HCT116 (cell line): ENCODE measurements at regions of chr19 and their contacts with region 1.

Region 1: DNA sequence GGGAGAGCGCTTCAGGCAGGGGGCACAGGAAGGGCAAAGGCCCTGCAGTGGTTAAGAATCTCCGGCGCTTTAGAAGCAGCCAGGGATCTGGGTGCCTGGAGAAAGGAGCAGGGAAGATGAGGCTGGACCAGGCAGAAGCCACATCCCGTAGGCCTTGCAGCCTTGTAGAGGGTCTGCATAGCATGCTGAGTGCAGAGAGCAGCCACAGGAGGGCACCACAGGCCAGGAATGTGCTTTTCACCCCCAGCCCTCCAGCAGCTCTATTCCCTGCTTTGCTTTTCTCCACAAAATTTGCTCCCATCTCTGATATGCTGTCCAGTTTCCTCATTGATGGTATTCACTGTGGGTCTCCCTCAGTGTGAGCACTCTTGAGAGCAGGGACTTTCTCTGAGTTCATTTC is 5.7 kb downstream of the WDR62 start:
- DNase-seq: no peak
- ATAC-seq: peak; percentile 82
- H3K4me3 ChIP-seq: no peak overlapping the region
- H3K27ac ChIP-seq: no peak overlapping the region
- H3K4me1 ChIP-seq: peaks cover 8 to 12% of the 10 kb centered on the region in 2 experiments
- H3K27me3 ChIP-seq: no peaks in the 10 kb centered on the region
- CTCF ChIP-seq: peak; percentile 24 to 75 (median 59); a peak in 4 of 6 replicates
- POLR2A ChIP-seq: no peak
- RAD21 ChIP-seq: peak; percentile 79

Region 2: GRCh38 chr19:35949131-35949530 is 111.3 kb before region 1 on chr19:
- CTCF ChIA-PET with region 1: no interaction called
- POLR2A ChIA-PET with region 1: no interaction called
- RAD21 ChIA-PET with region 1: no interaction called
- intact Hi-C with region 1: no loop called
- DNase-seq: no peak
- ATAC-seq: no peak
- H3K4me3 ChIP-seq: no peak overlapping the region
- H3K27ac ChIP-seq: no peak overlapping the region
- H3K4me1 ChIP-seq: peaks cover 0 to 5% of the 10 kb centered on the region in 2 experiments; a peak in 2 of 4 replicates
- H3K27me3 ChIP-seq: no peaks in the 10 kb centered on the region
- CTCF ChIP-seq: no peak
- POLR2A ChIP-seq: no peak
- RAD21 ChIP-seq: no peak

Region 3: DNA sequence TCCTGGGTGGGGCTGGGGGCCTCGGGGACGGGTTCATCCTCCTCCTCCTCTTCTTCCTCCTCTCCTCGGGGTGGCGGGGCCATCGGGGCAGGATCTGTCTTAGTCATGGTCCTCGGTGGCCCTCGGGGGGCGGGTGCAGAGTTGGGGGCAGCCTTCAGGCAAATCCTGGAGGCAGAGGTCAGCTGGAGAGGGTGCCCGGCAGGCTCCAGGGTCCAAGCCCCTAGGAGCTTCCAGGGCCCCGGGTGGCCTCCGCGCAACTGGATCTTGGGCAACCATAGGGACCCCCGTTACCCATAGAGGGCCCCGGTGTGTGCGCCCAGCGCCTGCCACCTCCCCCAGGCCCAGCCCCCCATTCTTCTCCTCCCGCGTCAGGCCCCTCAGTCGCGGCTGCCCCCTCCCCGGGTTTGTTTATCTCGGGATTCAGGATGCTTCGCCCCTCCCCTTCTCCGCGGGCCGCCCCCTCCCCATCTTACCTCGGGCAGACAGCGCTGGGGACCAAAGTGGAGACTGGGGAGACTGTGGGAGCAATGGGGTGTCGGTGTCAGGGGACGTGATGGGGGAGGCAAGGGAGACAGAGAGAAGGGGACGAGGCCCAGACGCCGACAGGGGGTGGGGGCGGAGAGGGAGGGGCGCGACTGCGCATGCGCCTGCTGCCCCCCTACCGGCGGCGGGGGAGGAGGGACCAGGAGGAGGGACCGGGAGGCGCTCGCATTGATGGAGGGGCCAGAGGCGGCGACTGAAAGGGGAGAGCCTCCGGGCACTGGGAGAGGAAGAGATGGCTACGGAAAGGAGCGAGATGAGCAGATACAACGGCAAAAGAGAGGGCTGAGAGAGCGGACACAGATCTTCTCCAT is 28.0 kb before region 1 on chr19 and contains the start of gene CLIP3:
- CTCF ChIA-PET with region 1: no interaction called
- POLR2A ChIA-PET with region 1: no interaction called
- RAD21 ChIA-PET with region 1: no interaction called
- intact Hi-C with region 1: no loop called
- DNase-seq: no peak
- ATAC-seq: no peak
- H3K4me3 ChIP-seq: no peak within 1 kb of the TSS
- H3K27ac ChIP-seq: no peak within 1 kb of the TSS
- H3K4me1 ChIP-seq: no peaks in the 10 kb centered on the region
- H3K27me3 ChIP-seq: no peaks in the 10 kb centered on the region
- CTCF ChIP-seq: no peak
- POLR2A ChIP-seq: no peak
- RAD21 ChIP-seq: no peak
- total RNA-seq, gene CLIP3: 1.5 TPM

Region 4: DNA sequence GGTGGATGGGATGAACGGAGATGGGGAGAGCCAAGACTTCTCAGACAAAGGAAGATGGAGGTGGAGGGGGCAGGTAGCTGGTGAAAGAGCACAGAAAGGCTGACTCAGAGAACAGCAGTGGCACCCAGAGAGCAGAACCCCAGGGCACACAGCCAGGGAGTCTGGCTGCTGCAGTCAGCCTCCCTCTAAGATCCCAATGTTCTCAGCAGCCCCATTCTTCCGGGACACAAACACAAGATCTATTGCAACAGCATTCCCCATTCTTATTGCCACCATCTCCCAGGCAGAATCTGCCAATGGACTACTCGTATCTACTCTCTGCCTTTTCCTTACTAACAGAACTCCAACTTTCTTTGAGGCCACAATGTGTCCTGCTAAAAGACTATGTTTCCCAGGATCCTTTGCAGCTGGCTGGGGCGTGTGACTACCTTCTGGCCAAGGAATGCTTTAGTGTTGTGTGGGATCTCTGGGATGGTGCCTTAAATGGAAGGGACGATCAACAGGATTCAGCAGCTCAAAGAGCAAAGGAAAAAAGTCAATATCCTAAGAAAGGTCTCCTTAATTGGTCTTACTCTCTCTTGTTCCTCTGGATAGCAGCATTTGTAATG is 13.9 kb before region 1 on chr19:
- CTCF ChIA-PET with region 1: no interaction called
- POLR2A ChIA-PET with region 1: no interaction called
- RAD21 ChIA-PET with region 1: no interaction called
- intact Hi-C with region 1: no loop called
- DNase-seq: no peak
- ATAC-seq: no peak
- H3K4me3 ChIP-seq: no peak overlapping the region
- H3K27ac ChIP-seq: no peak overlapping the region
- H3K4me1 ChIP-seq: peaks cover under 1 to 16% of the 10 kb centered on the region in 2 experiments; a peak in 3 of 4 replicates
- H3K27me3 ChIP-seq: no peaks in the 10 kb centered on the region
- CTCF ChIP-seq: no peak
- POLR2A ChIP-seq: no peak
- RAD21 ChIP-seq: no peak

Region 5: GRCh38 chr19:36132489-36132891 is 72.1 kb after region 1 on chr19:
- CTCF ChIA-PET with region 1: interaction called, 3 read pairs
- POLR2A ChIA-PET with region 1: no interaction called
- RAD21 ChIA-PET with region 1: interaction called in 1 of 2 experiments, 4 read pairs
- intact Hi-C with region 1: loop called (anchors 5 kb)
- DNase-seq: peak; percentile 91
- ATAC-seq: peak; percentile 57
- H3K4me3 ChIP-seq: peak overlapping the region in 1 of 2 experiments; percentile 32; a peak in 2 of 4 replicates
- H3K27ac ChIP-seq: peak overlapping the region; percentile 60
- H3K4me1 ChIP-seq: peaks cover 71 to 96% of the 10 kb centered on the region in 2 experiments
- H3K27me3 ChIP-seq: no peaks in the 10 kb centered on the region
- CTCF ChIP-seq: no peak
- POLR2A ChIP-seq: no peak
- RAD21 ChIP-seq: no peak

Region 6: GRCh38 chr19:36169084-36169760 is 108.8 kb after region 1 on chr19:
- CTCF ChIA-PET with region 1: no interaction called
- POLR2A ChIA-PET with region 1: interaction called, 3 read pairs
- RAD21 ChIA-PET with region 1: no interaction called
- intact Hi-C with region 1: loop called (anchors 1 kb)
- DNase-seq: no peak
- ATAC-seq: no peak
- H3K4me3 ChIP-seq: no peak overlapping the region
- H3K27ac ChIP-seq: peak overlapping the region; percentile 13; the same call in 1 of the 2 replicates
- H3K4me1 ChIP-seq: peaks cover 6 to 13% of the 10 kb centered on the region in 2 experiments; a peak in 3 of 4 replicates
- H3K27me3 ChIP-seq: no peaks in the 10 kb centered on the region
- CTCF ChIP-seq: no peak
- POLR2A ChIP-seq: no peak
- RAD21 ChIP-seq: no peak

Region 7: GRCh38 chr19:36489118-36489919 is 428.9 kb after region 1 on chr19 and contains the start of gene ZNF566:
- CTCF ChIA-PET with region 1: no interaction called
- POLR2A ChIA-PET with region 1: no interaction called
- RAD21 ChIA-PET with region 1: no interaction called
- intact Hi-C with region 1: loop called (anchors 5 kb)
- DNase-seq: peak; percentile 93
- ATAC-seq: peak; percentile 96
- H3K4me3 ChIP-seq: peak within 1 kb of the TSS; percentile 68 to 91
- H3K27ac ChIP-seq: peak within 1 kb of the TSS; percentile 74
- H3K4me1 ChIP-seq: peaks cover 0 to 18% of the 10 kb centered on the region in 2 experiments; a peak in 2 of 4 replicates
- H3K27me3 ChIP-seq: no peaks in the 10 kb centered on the region
- CTCF ChIP-seq: no peak
- POLR2A ChIP-seq: peak; percentile 38
- RAD21 ChIP-seq: no peak
- total RNA-seq, gene ZNF566: 6.4 TPM

Region 8: DNA sequence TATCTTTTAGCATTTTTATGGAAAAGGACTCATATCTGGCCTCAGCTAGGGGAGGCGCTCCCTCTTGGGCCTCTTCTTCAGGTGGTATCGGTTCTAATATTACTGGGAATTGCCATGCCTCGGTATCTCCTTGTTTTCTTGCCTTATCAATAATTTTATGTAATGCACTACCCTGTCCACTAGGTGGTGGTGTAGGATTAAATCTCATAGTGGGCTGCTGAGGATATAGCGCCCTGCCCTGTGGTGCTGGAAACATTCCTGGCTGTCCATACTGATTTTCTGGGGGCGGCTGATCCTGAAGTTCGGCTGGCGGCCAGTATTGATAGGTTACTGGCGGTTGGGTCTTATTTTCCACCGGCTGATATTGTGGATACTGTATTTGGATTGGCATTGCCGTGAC is 1053.6 kb after region 1 on chr19:
- CTCF ChIA-PET with region 1: no interaction called
- POLR2A ChIA-PET with region 1: no interaction called
- RAD21 ChIA-PET with region 1: no interaction called
- intact Hi-C with region 1: loop called (anchors 10 kb)
- DNase-seq: no peak
- ATAC-seq: no peak
- H3K4me3 ChIP-seq: no peak overlapping the region
- H3K27ac ChIP-seq: no peak overlapping the region
- H3K4me1 ChIP-seq: no peaks in the 10 kb centered on the region
- H3K27me3 ChIP-seq: no peaks in the 10 kb centered on the region
- CTCF ChIP-seq: peak; percentile 12 to 61 (median 40); a peak in 3 of 6 replicates
- POLR2A ChIP-seq: no peak
- RAD21 ChIP-seq: peak; percentile 51